ENCODE measurements at regions of chr6 and their contacts with region 1.

Region 1: DNA sequence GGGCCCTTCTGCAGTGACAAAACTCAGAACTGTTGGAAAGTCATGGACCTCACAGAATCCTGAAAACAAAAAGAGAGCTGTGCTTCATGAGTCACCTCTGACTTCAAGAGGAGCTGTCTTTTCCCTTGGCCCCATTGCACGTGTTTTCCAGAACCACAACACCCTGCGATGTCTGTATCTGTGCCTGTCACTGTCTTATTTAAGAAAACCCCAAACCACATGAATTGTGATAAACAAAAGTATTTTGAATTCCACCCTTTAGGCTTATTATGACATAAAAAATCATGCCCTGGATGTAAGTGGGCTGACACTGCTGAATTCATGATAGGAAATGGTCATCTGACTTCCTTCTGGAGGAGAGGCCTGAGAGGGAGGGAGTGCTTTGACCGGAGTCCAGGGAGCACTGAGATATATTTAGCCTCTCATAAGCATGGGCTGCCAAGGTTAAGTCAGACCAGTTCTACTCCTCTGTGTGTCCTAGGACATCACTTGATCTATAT is 96.4 kb upstream of the DUSP22 start:
- DNase-seq: peak; percentile 85
- H3K4me3 Mint-ChIP-seq: peak overlapping the region; percentile 21
- H3K27ac Mint-ChIP-seq: peak overlapping the region; percentile 74
- H3K4me1 Mint-ChIP-seq: peaks cover 44% of the 10 kb centered on the region
- H3K27me3 Mint-ChIP-seq: peaks cover 2% of the 10 kb centered on the region

Region 2: DNA sequence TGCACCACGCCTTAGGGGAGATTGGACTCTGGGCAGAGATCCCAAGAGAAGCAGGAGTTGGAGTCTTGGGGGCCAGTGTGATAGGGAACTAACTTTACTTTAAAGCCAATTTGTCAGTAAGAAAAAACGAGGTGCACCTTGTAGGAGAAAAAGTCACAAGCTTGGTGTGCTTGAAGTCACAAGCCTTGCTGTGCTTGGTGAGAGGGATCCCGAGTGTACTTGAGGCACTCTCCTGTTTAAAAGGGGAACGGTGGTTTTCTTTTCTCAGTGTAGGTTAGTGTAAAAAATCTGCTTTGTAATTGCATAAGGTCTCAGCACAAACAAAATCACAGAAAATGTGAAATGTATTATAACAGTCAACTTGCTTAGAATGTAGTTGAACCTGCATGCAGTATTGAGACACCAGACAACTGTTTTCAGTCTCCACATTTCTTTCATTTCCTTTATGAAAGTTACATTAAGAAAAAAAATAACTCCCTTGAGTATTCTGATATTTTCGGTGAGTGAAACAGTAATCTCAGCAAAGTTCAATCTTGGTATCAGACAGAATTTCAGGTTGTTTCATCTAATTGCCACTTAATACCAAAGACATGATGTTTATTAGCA is 14.8 kb before region 1 on chr6:
- intact Hi-C with region 1: no loop called
- DNase-seq: no peak
- H3K4me3 Mint-ChIP-seq: no peak overlapping the region
- H3K27ac Mint-ChIP-seq: no peak overlapping the region
- H3K4me1 Mint-ChIP-seq: peaks cover 23% of the 10 kb centered on the region
- H3K27me3 Mint-ChIP-seq: peaks cover 3% of the 10 kb centered on the region

Region 3: DNA sequence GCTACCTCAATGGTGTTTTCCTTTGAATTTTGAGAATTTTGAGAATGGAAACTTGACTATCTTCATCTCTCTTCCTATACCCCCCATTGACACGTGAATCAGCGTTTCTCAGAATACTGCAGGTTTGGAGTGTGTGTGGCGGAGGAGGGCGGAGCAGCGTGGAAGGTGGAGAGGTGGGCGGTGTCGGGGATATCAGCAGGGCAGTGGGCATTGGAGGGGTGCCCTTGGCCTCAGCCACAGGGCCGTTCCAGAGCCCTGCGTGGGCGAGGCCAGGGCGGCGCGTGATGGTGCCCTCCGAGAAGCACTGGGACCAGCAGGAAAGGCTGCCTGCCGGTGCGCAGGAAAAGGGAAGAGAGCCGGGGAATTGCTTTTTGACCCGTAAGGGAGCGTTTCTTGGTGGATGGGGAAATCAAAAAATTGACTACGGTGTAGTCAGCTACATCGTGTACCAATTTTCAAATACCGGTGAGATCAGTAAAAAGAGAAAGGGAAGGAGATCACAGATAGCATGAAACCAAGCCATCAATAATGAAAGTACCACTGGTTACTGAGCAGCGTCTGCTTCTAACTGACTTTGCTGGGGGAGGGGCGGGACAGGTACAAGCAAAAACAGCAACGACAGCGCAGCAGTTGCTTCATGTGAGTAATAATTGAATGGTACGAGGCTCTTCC is 13.7 kb after region 1 on chr6:
- intact Hi-C with region 1: loop called (anchors 1 kb)
- DNase-seq: peak; percentile 82
- H3K4me3 Mint-ChIP-seq: peak overlapping the region; percentile 69
- H3K27ac Mint-ChIP-seq: peak overlapping the region; percentile 56
- H3K4me1 Mint-ChIP-seq: peaks cover 27% of the 10 kb centered on the region
- H3K27me3 Mint-ChIP-seq: peaks cover 12% of the 10 kb centered on the region

Region 4: GRCh38 chr6:219641-220198 is 23.8 kb after region 1 on chr6:
- intact Hi-C with region 1: loop called (anchors 1 kb)
- DNase-seq: no peak
- H3K4me3 Mint-ChIP-seq: no peak overlapping the region
- H3K27ac Mint-ChIP-seq: no peak overlapping the region
- H3K4me1 Mint-ChIP-seq: peaks cover 68% of the 10 kb centered on the region
- H3K27me3 Mint-ChIP-seq: no peaks in the 10 kb centered on the region

Region 5: DNA sequence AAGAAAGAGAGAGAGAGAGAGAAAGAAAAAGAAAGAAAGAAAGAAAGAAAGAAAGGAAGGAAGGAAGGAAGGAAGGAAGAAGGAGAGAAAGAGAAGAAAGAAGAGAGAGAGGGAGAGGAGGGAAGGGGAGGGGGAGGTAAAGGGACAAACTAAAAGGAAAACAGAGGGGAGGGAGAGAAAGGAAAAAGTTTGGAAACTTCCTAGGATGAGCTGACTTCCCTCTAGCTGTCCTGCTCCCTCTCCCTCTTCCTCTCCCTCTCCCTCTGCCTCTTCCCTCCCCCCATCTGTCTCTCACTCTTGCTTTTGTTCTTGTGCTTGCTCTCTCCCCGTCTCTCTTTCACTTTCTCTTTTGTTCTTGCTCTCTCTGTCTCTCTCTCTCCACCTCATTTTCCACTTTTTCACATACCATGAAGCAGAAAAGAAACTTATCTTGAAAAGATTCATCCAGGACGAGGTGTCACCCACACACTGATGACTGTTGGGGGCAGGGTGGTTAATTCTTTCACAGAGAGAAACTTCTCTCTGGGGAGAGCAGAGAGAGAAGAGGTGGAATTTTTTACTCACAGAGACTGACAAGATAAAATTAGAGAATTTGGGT is 40.0 kb after region 1 on chr6:
- intact Hi-C with region 1: loop called (anchors 1 kb)
- DNase-seq: peak; percentile 87
- H3K4me3 Mint-ChIP-seq: peak overlapping the region; percentile 74
- H3K27ac Mint-ChIP-seq: peak overlapping the region; percentile 85
- H3K4me1 Mint-ChIP-seq: peaks cover 47% of the 10 kb centered on the region
- H3K27me3 Mint-ChIP-seq: no peaks in the 10 kb centered on the region

Region 6: DNA sequence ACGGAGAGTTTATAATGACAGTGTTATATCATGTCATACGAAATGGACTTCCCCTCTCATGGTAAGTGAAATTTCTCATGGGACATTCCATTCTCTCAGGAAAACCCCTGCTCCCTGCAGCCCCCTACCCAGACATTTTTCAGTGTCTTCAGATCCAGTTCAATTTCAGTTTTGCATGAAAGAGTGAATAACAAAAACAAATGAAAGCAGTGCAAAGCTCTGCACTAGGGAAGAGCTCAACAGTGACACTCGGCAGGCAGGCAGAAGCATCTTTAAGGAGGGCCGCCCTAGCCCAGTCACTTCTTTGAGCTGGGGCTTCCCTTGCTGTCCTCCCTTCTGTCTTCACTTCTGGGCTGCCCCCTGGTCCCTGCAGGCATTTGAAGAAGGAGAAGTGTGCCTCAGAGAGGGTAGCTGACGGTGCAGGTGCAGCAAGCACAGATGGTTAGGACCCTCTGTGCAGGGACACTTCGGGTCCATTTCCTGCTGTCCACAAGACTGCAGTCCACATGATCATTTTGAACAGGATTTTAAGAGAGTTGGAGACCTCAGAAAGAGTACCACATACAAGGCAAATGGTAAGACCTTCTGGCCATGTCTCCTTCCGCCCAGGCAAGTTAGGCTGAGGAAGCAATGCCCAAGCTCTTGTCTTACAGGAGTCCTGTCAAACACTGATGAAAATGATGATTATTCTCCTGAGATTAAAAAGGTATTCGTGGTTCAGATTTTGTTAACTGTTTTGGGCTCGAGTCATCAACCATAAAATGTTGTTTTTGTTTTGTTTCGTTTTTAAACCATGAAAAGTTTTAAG is 91.0 kb after region 1 on chr6:
- intact Hi-C with region 1: no loop called
- DNase-seq: peak; percentile 56
- H3K4me3 Mint-ChIP-seq: no peak overlapping the region
- H3K27ac Mint-ChIP-seq: no peak overlapping the region
- H3K4me1 Mint-ChIP-seq: peaks cover 35% of the 10 kb centered on the region
- H3K27me3 Mint-ChIP-seq: no peaks in the 10 kb centered on the region